ENCODE measurements at regions of chr10 and their contacts with region 1.

Region 1: GRCh38 chr10:113126229-113127201 is 176.5 kb downstream of the TCF7L2 start:
- DNase-seq: peak; percentile 36 to 70
- ATAC-seq: peak; percentile 89 to 100 (median 90)
- H3K4me3 ChIP-seq: no peak overlapping the region
- H3K4me3 Mint-ChIP-seq: no peak overlapping the region
- H3K27ac ChIP-seq: no peak overlapping the region
- H3K27ac Mint-ChIP-seq: no peak overlapping the region
- H3K4me1 ChIP-seq: no peaks in the 10 kb centered on the region
- H3K4me1 Mint-ChIP-seq: peaks cover 0 to 6% of the 10 kb centered on the region in 2 donors
- H3K27me3 ChIP-seq: peaks cover 9% of the 10 kb centered on the region
- H3K27me3 Mint-ChIP-seq: peaks cover 41 to 68% of the 10 kb centered on the region in 2 donors
- CTCF ChIP-seq: peak; percentile 36

Region 2: GRCh38 chr10:112721080-112721698 is 405.3 kb before region 1 on chr10:
- intact Hi-C with region 1: loop called (anchors 2 kb)
- DNase-seq: peak in 1 of 2 donors; percentile 61
- ATAC-seq: peak in 1 of 3 donors; percentile 72
- H3K4me3 ChIP-seq: no peak overlapping the region
- H3K4me3 Mint-ChIP-seq: no peak overlapping the region
- H3K27ac ChIP-seq: no peak overlapping the region
- H3K27ac Mint-ChIP-seq: no peak overlapping the region
- H3K4me1 ChIP-seq: no peaks in the 10 kb centered on the region
- H3K4me1 Mint-ChIP-seq: peaks cover 5 to 7% of the 10 kb centered on the region in 2 donors
- H3K27me3 ChIP-seq: no peaks in the 10 kb centered on the region
- H3K27me3 Mint-ChIP-seq: no peaks in the 10 kb centered on the region
- CTCF ChIP-seq: peak; percentile 66

Region 3: GRCh38 chr10:113425541-113425972 is 299.0 kb after region 1 on chr10:
- intact Hi-C with region 1: no loop called
- DNase-seq: no peak
- ATAC-seq: no peak
- H3K4me3 ChIP-seq: no peak overlapping the region
- H3K4me3 Mint-ChIP-seq: no peak overlapping the region
- H3K27ac ChIP-seq: no peak overlapping the region
- H3K27ac Mint-ChIP-seq: no peak overlapping the region
- H3K4me1 ChIP-seq: no peaks in the 10 kb centered on the region
- H3K4me1 Mint-ChIP-seq: no peaks in the 10 kb centered on the region
- H3K27me3 ChIP-seq: no peaks in the 10 kb centered on the region
- H3K27me3 Mint-ChIP-seq: peaks cover 6 to 10% of the 10 kb centered on the region in 2 donors
- CTCF ChIP-seq: no peak

Measured in natural killer cell (primary cell).